ENCODE measurements at regions of chr18 and their contacts with region 1.

Region 1: DNA sequence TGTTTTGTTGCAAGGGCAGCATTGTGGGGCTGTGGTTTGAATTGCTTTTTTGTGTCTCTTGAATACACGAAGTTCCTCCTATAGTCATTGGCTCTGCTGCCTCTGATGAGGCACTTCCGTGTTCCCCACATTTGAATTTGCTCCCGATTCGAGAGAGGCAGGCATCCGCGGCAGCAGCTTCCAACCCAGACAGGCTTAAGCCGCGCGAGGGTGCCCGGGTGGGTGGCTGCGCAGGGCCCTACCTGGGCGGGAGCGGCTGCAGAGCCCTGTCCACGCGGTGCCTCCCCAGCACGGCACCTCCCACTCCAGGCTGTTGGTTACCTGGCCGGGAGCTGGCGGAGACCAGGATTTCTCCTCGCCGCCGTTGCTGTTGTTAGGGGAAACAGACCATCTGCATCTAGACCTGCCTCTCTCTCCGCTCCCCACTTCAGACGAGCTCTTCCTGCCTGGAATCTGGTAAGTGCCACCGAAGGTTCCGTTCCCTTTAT is 151.3 kb downstream of the NEDD4L start:
- DNase-seq: no peak
- ATAC-seq: no peak
- H3K4me3 ChIP-seq: peak overlapping the region in 3 of 4 donors; percentile 19 to 38 (median 19)
- H3K27ac ChIP-seq: no peak overlapping the region
- H3K4me1 ChIP-seq: peaks cover 0 to 6% of the 10 kb centered on the region in 2 donors
- H3K27me3 ChIP-seq: no peaks in the 10 kb centered on the region
- CTCF ChIP-seq: no peak
- POLR2A ChIP-seq: no peak

Region 2: GRCh38 chr18:58223717-58224424 is 28.5 kb after region 1 on chr18:
- in situ Hi-C with region 1: no loop called
- intact Hi-C with region 1: loop called (anchors 5 kb)
- DNase-seq: peak; percentile 33 to 53
- ATAC-seq: peak; percentile 98 to 99
- H3K4me3 ChIP-seq: peak overlapping the region in 2 of 4 donors; percentile 11 to 25
- H3K27ac ChIP-seq: peak overlapping the region; percentile 32 to 71 (median 64)
- H3K4me1 ChIP-seq: peaks cover 10 to 12% of the 10 kb centered on the region in 2 donors
- H3K27me3 ChIP-seq: no peaks in the 10 kb centered on the region
- CTCF ChIP-seq: no peak
- POLR2A ChIP-seq: no peak

Region 3: GRCh38 chr18:58321986-58322385 is 126.7 kb after region 1 on chr18:
- in situ Hi-C with region 1: loop called in 2 of 4 experiments (anchors 10 to 25 kb)
- intact Hi-C with region 1: loop called (anchors 5 kb)
- DNase-seq: peak; percentile 80 to 85
- ATAC-seq: peak; percentile 91 to 98
- H3K4me3 ChIP-seq: peak overlapping the region in 1 of 4 donors; percentile 11
- H3K27ac ChIP-seq: peak overlapping the region; percentile 62 to 85 (median 82)
- H3K4me1 ChIP-seq: peaks cover 26 to 39% of the 10 kb centered on the region in 2 donors
- H3K27me3 ChIP-seq: no peaks in the 10 kb centered on the region
- CTCF ChIP-seq: peak in 4 of 5 experiments; percentile 57 to 74 (median 70)
- POLR2A ChIP-seq: peak; percentile 49 to 51

Measured in gastrocnemius medialis (tissue), 4 donors.